ENCODE measurements at regions of chr10 and their contacts with region 1.

Region 1: DNA sequence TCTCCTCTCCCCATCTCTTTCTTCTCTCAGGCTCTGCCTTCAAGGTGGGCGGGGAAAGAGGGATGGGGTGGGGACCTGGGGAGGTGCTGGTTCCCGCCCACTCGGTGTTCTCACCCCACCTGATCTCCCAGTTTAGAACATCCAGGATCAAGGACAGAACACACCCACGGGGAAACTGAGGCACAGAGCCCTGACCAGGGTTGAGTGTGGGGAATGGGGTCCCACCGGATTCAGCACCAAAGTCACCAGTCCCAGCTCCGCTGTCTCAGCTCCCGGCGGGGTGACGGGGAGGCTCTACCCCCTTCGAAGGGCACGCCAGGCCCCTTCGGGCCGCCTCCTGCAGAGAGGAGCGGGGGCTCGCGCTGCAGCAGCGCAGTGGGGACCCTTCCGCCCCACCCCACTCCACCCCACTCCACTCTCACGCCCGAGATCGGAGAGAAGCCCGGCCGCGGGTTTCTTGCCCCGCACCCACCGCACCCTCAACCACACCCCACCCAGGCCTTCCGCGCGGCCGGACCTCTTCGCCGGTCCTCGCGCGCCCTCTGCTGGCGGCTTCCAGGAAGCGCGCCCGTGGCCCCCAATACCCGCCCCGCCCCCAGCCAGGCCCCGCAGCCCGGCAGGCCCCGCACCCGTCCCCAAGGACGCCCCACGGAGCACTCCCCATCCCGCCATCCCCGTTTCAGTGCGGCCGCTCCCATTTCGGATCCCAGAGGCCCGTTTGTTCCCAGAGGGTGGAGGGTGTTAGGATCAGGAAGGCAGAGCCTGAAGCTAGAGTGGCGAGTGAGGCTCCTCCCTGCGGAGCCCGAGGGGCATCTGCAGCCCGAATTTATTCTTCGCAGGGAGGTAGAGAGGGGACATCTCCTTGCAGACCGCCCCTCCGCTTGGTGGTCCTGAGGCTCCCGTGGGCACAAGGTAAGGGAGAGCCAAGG is 18.0 kb downstream of the POLL start:
- DNase-seq: peak; percentile 92
- CTCF ChIP-seq: peak; percentile 83

Region 2: GRCh38 chr10:101272229-101272868 is 297.8 kb before region 1 on chr10:
- CTCF ChIA-PET with region 1: interaction called, 54 read pairs
- POLR2A ChIA-PET with region 1: no interaction called
- DNase-seq: peak; percentile 84
- CTCF ChIP-seq: peak; percentile 81

Region 3: GRCh38 chr10:101536800-101537199 is 33.3 kb before region 1 on chr10:
- CTCF ChIA-PET with region 1: interaction called, 10 read pairs
- POLR2A ChIA-PET with region 1: no interaction called
- DNase-seq: peak; percentile 45
- CTCF ChIP-seq: peak; percentile 37

Region 4: GRCh38 chr10:101587725-101588653 is 17.9 kb after region 1 on chr10 and contains the starts of genes DPCD and POLL:
- CTCF ChIA-PET with region 1: interaction called, 116 read pairs
- POLR2A ChIA-PET with region 1: no interaction called
- DNase-seq: peak; percentile 98
- CTCF ChIP-seq: no peak